WTC11 (cell line): ENCODE measurements at regions of chr10 and their contacts with region 1.

Region 1: GRCh38 chr10:132307823-132308587 is at the start of gene STK32C:
- DNase-seq: peak; percentile 86
- ATAC-seq: peak; percentile 71
- H3K4me3 Mint-ChIP-seq: peak within 1 kb of the TSS; percentile 89
- H3K27ac Mint-ChIP-seq: no peak within 1 kb of the TSS
- H3K4me1 Mint-ChIP-seq: peaks cover 13% of the 10 kb centered on the region
- H3K27me3 Mint-ChIP-seq: peaks cover 59% of the 10 kb centered on the region
- CTCF ChIP-seq: no peak
- total RNA-seq, gene STK32C: 20.7 to 23.2 TPM (median 22.2 TPM) in 3 replicates

Region 2: DNA sequence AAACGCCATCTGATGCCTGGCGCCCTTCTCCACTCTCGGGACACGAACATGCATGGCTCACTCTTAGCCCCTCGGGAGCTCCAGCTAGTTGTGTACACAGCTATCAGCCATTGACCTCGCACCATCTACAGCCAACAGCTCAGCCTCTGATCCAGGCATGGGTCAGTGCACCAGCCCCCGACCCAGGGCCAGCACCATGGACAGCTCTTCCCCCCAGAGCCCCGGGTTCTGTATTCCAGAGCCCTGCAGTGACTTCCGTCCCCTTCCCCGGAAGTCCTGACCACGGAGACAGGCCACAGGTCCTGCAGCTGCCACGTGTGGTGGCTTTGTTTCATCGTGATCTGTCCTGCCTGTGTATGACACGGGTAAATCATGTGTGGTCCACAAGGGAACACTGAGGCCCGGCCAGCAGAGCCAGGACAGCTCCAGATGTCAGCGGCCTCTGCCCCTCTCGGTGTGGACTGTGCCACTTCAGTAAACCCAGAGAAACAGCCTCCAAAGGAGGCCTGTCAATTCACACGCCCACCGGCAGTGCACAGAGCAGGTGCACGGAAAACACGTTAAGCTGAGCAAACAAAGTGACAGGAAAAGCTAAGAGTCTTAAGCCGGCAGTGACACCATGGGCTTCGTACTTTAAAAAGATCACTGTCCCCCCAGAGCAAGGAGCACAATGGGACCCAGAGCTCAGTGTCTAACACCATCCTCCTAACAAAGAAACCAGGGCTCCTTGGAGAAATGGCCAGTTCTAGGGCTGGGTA is 13.3 kb before region 1 on chr10:
- CTCF ChIA-PET with region 1: interaction called, 11 read pairs
- POLR2A ChIA-PET with region 1: no interaction called
- DNase-seq: peak; percentile 67
- ATAC-seq: peak; percentile 38; the same call in 1 of the 2 replicates
- H3K4me3 Mint-ChIP-seq: no peak overlapping the region
- H3K27ac Mint-ChIP-seq: no peak overlapping the region
- H3K4me1 Mint-ChIP-seq: peaks cover 10% of the 10 kb centered on the region
- H3K27me3 Mint-ChIP-seq: no peaks in the 10 kb centered on the region
- CTCF ChIP-seq: no peak